ENCODE measurements at regions of chr1 and their contacts with region 1.

Region 1: GRCh38 chr1:51341876-51342496 is 11.6 kb upstream of the TTC39A start:
- DNase-seq: no peak
- ATAC-seq: peak; percentile 12
- H3K4me3 Mint-ChIP-seq: no peak overlapping the region
- H3K27ac Mint-ChIP-seq: no peak overlapping the region
- H3K4me1 Mint-ChIP-seq: peaks cover 14% of the 10 kb centered on the region
- H3K27me3 Mint-ChIP-seq: peaks cover 22% of the 10 kb centered on the region
- CTCF ChIP-seq: no peak

Region 2: GRCh38 chr1:51296383-51297357 is 45.3 kb before region 1 on chr1:
- CTCF ChIA-PET with region 1: interaction called, 15 read pairs
- POLR2A ChIA-PET with region 1: no interaction called
- DNase-seq: peak; percentile 95
- ATAC-seq: peak; percentile 89
- H3K4me3 Mint-ChIP-seq: no peak overlapping the region
- H3K27ac Mint-ChIP-seq: no peak overlapping the region
- H3K4me1 Mint-ChIP-seq: peaks cover 13% of the 10 kb centered on the region
- H3K27me3 Mint-ChIP-seq: peaks cover 13% of the 10 kb centered on the region
- CTCF ChIP-seq: peak; percentile 97

Region 3: DNA sequence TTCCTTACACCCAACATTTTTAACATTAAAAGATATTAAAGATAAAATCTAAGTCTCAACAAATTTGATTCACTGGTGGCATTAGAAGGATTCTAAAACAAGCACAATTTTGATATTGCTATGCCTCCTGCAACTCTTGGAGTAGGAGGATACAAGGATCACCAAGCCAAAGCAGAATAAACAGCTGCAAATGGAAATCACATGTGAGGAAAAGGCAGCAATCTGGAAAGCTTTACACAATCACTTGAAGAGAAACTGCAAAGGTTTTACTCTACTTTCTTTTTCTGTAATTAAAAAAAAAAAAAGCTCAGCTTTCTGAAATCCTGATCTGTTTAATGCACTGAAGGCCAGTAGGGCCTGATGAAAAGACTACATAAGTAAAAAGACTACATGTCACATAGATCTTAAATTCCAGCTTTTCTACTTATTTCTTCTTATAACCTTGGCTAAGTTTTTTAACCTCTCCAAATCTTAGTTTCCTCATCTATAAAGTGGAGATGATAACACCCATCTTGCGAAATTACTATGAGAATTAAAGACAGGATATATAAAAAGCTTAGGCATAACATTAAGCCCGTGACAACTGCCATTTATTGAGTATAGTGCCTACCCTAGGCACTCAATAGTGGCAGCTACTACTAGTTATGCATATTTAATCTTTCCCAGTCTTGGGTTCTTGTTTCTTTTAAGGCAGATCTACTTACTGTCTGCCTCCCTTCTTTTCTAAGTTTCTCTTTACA is 103.5 kb after region 1 on chr1:
- CTCF ChIA-PET with region 1: no interaction called
- POLR2A ChIA-PET with region 1: no interaction called
- DNase-seq: no peak
- ATAC-seq: no peak
- H3K4me3 Mint-ChIP-seq: no peak overlapping the region
- H3K27ac Mint-ChIP-seq: no peak overlapping the region
- H3K4me1 Mint-ChIP-seq: no peaks in the 10 kb centered on the region
- H3K27me3 Mint-ChIP-seq: no peaks in the 10 kb centered on the region
- CTCF ChIP-seq: no peak

Measured in WTC11 (cell line).